ENCODE measurements at regions of chr1 and their contacts with region 1.

Region 1: GRCh38 chr1:117534995-117535467 is 70.8 kb upstream of the TENT5C start:
- DNase-seq: peak; percentile 37
- H3K4me3 ChIP-seq: no peak overlapping the region
- H3K27ac ChIP-seq: no peak overlapping the region
- H3K4me1 ChIP-seq: no peaks in the 10 kb centered on the region
- H3K27me3 ChIP-seq: no peaks in the 10 kb centered on the region
- CTCF ChIP-seq: peak; percentile 35 to 75 (median 53)
- POLR2A ChIP-seq: no peak

Region 2: GRCh38 chr1:117758444-117759316 is 223.6 kb after region 1 on chr1:
- intact Hi-C with region 1: loop called (anchors 10 kb)
- DNase-seq: peak; percentile 89
- H3K4me3 ChIP-seq: peak overlapping the region; percentile 50 to 57
- H3K27ac ChIP-seq: no peak overlapping the region
- H3K4me1 ChIP-seq: peaks cover 3% of the 10 kb centered on the region
- H3K27me3 ChIP-seq: no peaks in the 10 kb centered on the region
- CTCF ChIP-seq: peak; percentile 78 to 95 (median 81)
- POLR2A ChIP-seq: no peak

Region 3: GRCh38 chr1:117857434-117857833 is 322.4 kb after region 1 on chr1:
- intact Hi-C with region 1: no loop called
- DNase-seq: no peak
- H3K4me3 ChIP-seq: no peak overlapping the region
- H3K27ac ChIP-seq: no peak overlapping the region
- H3K4me1 ChIP-seq: no peaks in the 10 kb centered on the region
- H3K27me3 ChIP-seq: no peaks in the 10 kb centered on the region
- CTCF ChIP-seq: no peak
- POLR2A ChIP-seq: no peak

Measured in testis (tissue), 5 donors.